Heart left ventricle (tissue), 16 donors: ENCODE measurements at regions of chr13 and their contacts with region 1.

Region 1: GRCh38 chr13:75704579-75705320 is 68.6 kb downstream of the LMO7 start:
- DNase-seq: no peak
- ATAC-seq: peak in 1 of 4 donors; percentile 50
- H3K4me3 ChIP-seq: no peak overlapping the region
- H3K27ac ChIP-seq: no peak overlapping the region
- H3K4me1 ChIP-seq: peaks cover 0 to 15% (median 5%) of the 10 kb centered on the region in 12 donors
- H3K27me3 ChIP-seq: no peaks in the 10 kb centered on the region
- CTCF ChIP-seq: no peak
- POLR2A ChIP-seq: no peak

Region 2: DNA sequence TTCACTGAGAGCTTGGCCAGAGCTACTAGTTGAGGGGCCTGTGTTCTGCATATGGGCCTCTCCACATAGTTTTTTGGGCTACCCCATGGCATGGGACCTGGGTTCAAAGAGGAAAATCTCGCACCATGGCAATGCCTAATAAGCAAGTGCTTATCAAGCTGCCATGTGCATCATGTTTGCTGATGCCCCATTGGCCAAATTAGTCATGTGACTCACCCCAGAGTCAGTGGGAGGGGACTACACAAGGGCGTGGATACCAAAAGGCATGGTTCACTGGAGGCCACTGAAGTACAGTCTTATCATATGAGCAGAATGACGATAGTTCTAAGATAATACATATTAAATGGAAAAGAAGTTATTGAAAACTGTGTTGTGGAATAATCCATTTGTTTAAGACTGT is 146.2 kb after region 1 on chr13:
- intact Hi-C with region 1: loop called in 3 of 10 experiments (anchors 10 kb)
- DNase-seq: no peak
- ATAC-seq: peak in 3 of 4 donors; percentile 20 to 60 (median 37)
- H3K4me3 ChIP-seq: no peak overlapping the region
- H3K27ac ChIP-seq: no peak overlapping the region
- H3K4me1 ChIP-seq: peaks cover 0 to 18% (median 0%) of the 10 kb centered on the region in 12 donors
- H3K27me3 ChIP-seq: no peaks in the 10 kb centered on the region
- CTCF ChIP-seq: no peak
- POLR2A ChIP-seq: no peak

Region 3: GRCh38 chr13:75920536-75920935 is 215.8 kb after region 1 on chr13:
- intact Hi-C with region 1: no loop called
- DNase-seq: no peak
- ATAC-seq: no peak
- H3K4me3 ChIP-seq: no peak overlapping the region
- H3K27ac ChIP-seq: no peak overlapping the region
- H3K4me1 ChIP-seq: no peaks in the 10 kb centered on the region
- H3K27me3 ChIP-seq: no peaks in the 10 kb centered on the region
- CTCF ChIP-seq: no peak
- POLR2A ChIP-seq: no peak

Region 4: GRCh38 chr13:76009491-76009890 is 304.7 kb after region 1 on chr13:
- intact Hi-C with region 1: no loop called
- DNase-seq: no peak
- ATAC-seq: no peak
- H3K4me3 ChIP-seq: no peak overlapping the region
- H3K27ac ChIP-seq: no peak overlapping the region
- H3K4me1 ChIP-seq: peaks cover 0 to 23% (median 7%) of the 10 kb centered on the region in 12 donors
- H3K27me3 ChIP-seq: no peaks in the 10 kb centered on the region
- CTCF ChIP-seq: no peak
- POLR2A ChIP-seq: no peak

Region 5: DNA sequence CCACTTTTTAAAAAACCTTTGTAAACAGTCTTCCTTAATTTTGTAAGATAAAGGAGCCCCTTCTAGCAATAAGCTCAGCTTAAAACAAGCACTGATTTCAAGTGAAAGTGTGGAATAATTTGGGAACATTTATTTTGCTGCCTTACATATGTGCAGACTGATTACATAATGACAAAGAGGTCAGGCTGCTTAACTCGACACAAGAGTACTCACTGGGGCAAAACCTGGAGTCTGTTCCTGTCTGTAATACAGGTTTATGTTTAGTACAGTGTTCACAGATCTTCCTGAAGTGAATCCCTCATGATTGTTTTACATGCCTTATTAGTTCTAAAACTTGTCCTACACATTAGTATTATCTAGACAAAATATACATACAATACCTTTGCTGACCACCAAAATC is 541.2 kb after region 1 on chr13:
- intact Hi-C with region 1: no loop called
- DNase-seq: no peak
- ATAC-seq: peak in 1 of 4 donors; percentile 32
- H3K4me3 ChIP-seq: no peak overlapping the region
- H3K27ac ChIP-seq: no peak overlapping the region
- H3K4me1 ChIP-seq: no peaks in the 10 kb centered on the region
- H3K27me3 ChIP-seq: no peaks in the 10 kb centered on the region
- CTCF ChIP-seq: no peak
- POLR2A ChIP-seq: no peak